ENCODE measurements at regions of chr6 and their contacts with region 1.

Region 1: GRCh38 chr6:116531675-116532570 is 13.6 kb downstream of the TRAPPC3L start:
- DNase-seq: peak; percentile 65 to 73 (median 67)
- H3K4me3 ChIP-seq: no peak overlapping the region
- H3K4me3 Mint-ChIP-seq: no peak overlapping the region
- H3K27ac ChIP-seq: no peak overlapping the region
- H3K27ac Mint-ChIP-seq: no peak overlapping the region
- H3K4me1 ChIP-seq: no peaks in the 10 kb centered on the region
- H3K4me1 Mint-ChIP-seq: peaks cover 0 to 4% (median under 1%) of the 10 kb centered on the region in 4 donors
- H3K27me3 ChIP-seq: no peaks in the 10 kb centered on the region
- H3K27me3 Mint-ChIP-seq: peaks cover 14 to 17% of the 10 kb centered on the region in 2 donors

Region 2: GRCh38 chr6:116217069-116217468 is 314.9 kb before region 1 on chr6:
- CTCF ChIA-PET with region 1: interaction called, 6 read pairs
- POLR2A ChIA-PET with region 1: no interaction called
- intact Hi-C with region 1: loop called (anchors 2 kb)
- DNase-seq: peak in 4 of 5 donors; percentile 35 to 51 (median 38)
- H3K4me3 ChIP-seq: no peak overlapping the region
- H3K4me3 Mint-ChIP-seq: no peak overlapping the region
- H3K27ac ChIP-seq: no peak overlapping the region
- H3K27ac Mint-ChIP-seq: peak overlapping the region in 3 of 7 donors; percentile 18 to 80 (median 68)
- H3K4me1 ChIP-seq: no peaks in the 10 kb centered on the region
- H3K4me1 Mint-ChIP-seq: peaks cover 0 to 4% (median 2%) of the 10 kb centered on the region in 4 donors
- H3K27me3 ChIP-seq: no peaks in the 10 kb centered on the region
- H3K27me3 Mint-ChIP-seq: no peaks in the 10 kb centered on the region

Region 3: DNA sequence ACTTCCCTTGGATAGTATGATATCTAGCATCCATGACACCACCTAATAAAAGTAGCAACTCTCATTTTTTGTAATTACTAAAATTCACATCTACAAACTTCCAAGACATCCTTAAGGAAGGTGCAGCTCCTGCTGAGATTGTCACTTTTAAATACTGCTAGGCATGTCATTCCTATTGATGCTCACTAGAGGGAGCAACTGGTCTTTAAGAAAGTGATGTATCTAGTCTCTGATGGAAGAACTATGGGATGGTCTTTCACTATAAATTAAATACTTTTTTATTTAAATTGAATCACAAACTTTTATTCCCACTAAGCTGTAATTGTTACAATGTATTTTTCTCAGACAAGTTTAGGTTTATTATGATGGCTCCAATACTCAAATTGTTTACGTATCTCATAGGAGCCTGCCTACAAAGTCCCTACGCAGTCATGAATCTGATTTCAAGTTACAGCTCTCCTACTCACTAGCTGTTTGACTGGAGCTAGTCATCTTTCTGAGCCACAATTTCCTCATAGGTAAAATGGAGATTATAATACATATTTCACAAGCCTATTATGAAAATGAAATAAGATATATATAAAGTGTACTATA is 244.1 kb before region 1 on chr6:
- CTCF ChIA-PET with region 1: interaction called, 121 read pairs
- POLR2A ChIA-PET with region 1: no interaction called
- intact Hi-C with region 1: loop called (anchors 1 kb)
- DNase-seq: peak in 4 of 5 donors; percentile 45 to 52 (median 48)
- H3K4me3 ChIP-seq: no peak overlapping the region
- H3K4me3 Mint-ChIP-seq: no peak overlapping the region
- H3K27ac ChIP-seq: no peak overlapping the region
- H3K27ac Mint-ChIP-seq: no peak overlapping the region
- H3K4me1 ChIP-seq: no peaks in the 10 kb centered on the region
- H3K4me1 Mint-ChIP-seq: peaks cover 0 to 4% (median 0%) of the 10 kb centered on the region in 4 donors
- H3K27me3 ChIP-seq: no peaks in the 10 kb centered on the region
- H3K27me3 Mint-ChIP-seq: no peaks in the 10 kb centered on the region

Region 4: DNA sequence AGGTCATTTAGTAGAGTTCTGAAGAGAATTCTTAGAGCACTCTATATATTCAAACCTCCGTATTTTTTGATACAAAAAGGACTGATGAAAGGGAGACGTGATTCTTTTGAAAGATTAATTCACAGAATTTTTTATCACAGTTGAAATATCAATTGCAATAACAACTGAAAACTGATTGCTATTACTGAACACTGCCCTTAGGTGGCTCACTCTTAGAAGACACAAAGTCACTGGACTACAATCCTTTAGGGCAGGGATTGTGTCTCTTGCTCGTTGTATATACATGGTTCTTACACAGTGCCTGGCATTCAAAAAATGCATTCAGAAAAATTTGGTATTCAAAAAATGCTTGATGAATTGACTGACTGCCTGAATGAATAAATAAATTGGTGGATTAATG is 87.8 kb before region 1 on chr6:
- CTCF ChIA-PET with region 1: interaction called, 26 read pairs
- POLR2A ChIA-PET with region 1: no interaction called
- intact Hi-C with region 1: loop called (anchors 1 kb)
- DNase-seq: peak in 3 of 5 donors; percentile 13 to 31 (median 14)
- H3K4me3 ChIP-seq: no peak overlapping the region
- H3K4me3 Mint-ChIP-seq: peak overlapping the region in 1 of 8 donors; percentile 1
- H3K27ac ChIP-seq: no peak overlapping the region
- H3K27ac Mint-ChIP-seq: peak overlapping the region in 1 of 7 donors; percentile 87
- H3K4me1 ChIP-seq: peaks cover 13% of the 10 kb centered on the region
- H3K4me1 Mint-ChIP-seq: peaks cover 7 to 15% (median 13%) of the 10 kb centered on the region in 4 donors
- H3K27me3 ChIP-seq: no peaks in the 10 kb centered on the region
- H3K27me3 Mint-ChIP-seq: peaks cover 0 to 6% of the 10 kb centered on the region in 2 donors

Region 5: GRCh38 chr6:116542426-116542825 is 10.5 kb after region 1 on chr6:
- CTCF ChIA-PET with region 1: interaction called, 26 read pairs
- POLR2A ChIA-PET with region 1: no interaction called
- intact Hi-C with region 1: no loop called
- DNase-seq: no peak
- H3K4me3 ChIP-seq: no peak overlapping the region
- H3K4me3 Mint-ChIP-seq: no peak overlapping the region
- H3K27ac ChIP-seq: no peak overlapping the region
- H3K27ac Mint-ChIP-seq: no peak overlapping the region
- H3K4me1 ChIP-seq: no peaks in the 10 kb centered on the region
- H3K4me1 Mint-ChIP-seq: no peaks in the 10 kb centered on the region
- H3K27me3 ChIP-seq: no peaks in the 10 kb centered on the region
- H3K27me3 Mint-ChIP-seq: peaks cover 19 to 22% of the 10 kb centered on the region in 2 donors

Region 6: GRCh38 chr6:116561377-116562018 is 29.6 kb after region 1 on chr6:
- CTCF ChIA-PET with region 1: interaction called, 27 read pairs
- POLR2A ChIA-PET with region 1: no interaction called
- intact Hi-C with region 1: loop called (anchors 1 kb)
- DNase-seq: peak; percentile 59 to 69 (median 64)
- H3K4me3 ChIP-seq: no peak overlapping the region
- H3K4me3 Mint-ChIP-seq: no peak overlapping the region
- H3K27ac ChIP-seq: no peak overlapping the region
- H3K27ac Mint-ChIP-seq: peak overlapping the region in 2 of 7 donors; percentile 24 to 63
- H3K4me1 ChIP-seq: no peaks in the 10 kb centered on the region
- H3K4me1 Mint-ChIP-seq: peaks cover 0 to 2% (median 1%) of the 10 kb centered on the region in 4 donors
- H3K27me3 ChIP-seq: no peaks in the 10 kb centered on the region
- H3K27me3 Mint-ChIP-seq: peaks cover 9 to 16% of the 10 kb centered on the region in 2 donors

Region 7: DNA sequence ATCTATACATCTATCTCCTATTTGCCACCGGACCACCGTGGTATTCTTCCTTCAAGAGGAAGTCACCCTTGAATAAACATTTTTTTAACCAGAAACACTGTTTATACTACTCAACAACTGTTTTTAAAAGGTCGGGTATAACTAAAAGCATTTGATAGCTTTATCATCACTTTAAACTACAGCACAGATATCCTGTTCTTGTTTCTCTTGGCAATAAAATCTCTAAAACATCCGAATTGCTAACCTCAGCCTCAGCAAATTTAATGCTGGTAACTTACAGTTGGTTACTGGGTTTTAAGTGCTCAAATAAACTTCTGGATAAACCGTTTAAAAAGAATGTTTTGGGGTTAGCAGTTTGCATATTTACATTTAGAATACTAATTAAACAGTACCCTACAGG is 116.2 kb after region 1 on chr6:
- CTCF ChIA-PET with region 1: interaction called, 8 read pairs
- POLR2A ChIA-PET with region 1: no interaction called
- intact Hi-C with region 1: loop called (anchors 1 kb)
- DNase-seq: no peak
- H3K4me3 ChIP-seq: no peak overlapping the region
- H3K4me3 Mint-ChIP-seq: no peak overlapping the region
- H3K27ac ChIP-seq: no peak overlapping the region
- H3K27ac Mint-ChIP-seq: peak overlapping the region in 2 of 7 donors; percentile 17 to 82
- H3K4me1 ChIP-seq: peaks cover 4% of the 10 kb centered on the region
- H3K4me1 Mint-ChIP-seq: peaks cover 0 to 10% (median 6%) of the 10 kb centered on the region in 4 donors
- H3K27me3 ChIP-seq: no peaks in the 10 kb centered on the region
- H3K27me3 Mint-ChIP-seq: no peaks in the 10 kb centered on the region